ENCODE measurements at regions of chr4 and their contacts with region 1.

Region 1: GRCh38 chr4:184528051-184528450 is 53.7 kb upstream of the IRF2 start:
- DNase-seq: no peak
- CTCF ChIP-seq: no peak

Region 2: GRCh38 chr4:184487513-184487912 is 40.5 kb before region 1 on chr4:
- CTCF ChIA-PET with region 1: no interaction called
- POLR2A ChIA-PET with region 1: no interaction called
- DNase-seq: no peak
- CTCF ChIP-seq: no peak

Region 3: DNA sequence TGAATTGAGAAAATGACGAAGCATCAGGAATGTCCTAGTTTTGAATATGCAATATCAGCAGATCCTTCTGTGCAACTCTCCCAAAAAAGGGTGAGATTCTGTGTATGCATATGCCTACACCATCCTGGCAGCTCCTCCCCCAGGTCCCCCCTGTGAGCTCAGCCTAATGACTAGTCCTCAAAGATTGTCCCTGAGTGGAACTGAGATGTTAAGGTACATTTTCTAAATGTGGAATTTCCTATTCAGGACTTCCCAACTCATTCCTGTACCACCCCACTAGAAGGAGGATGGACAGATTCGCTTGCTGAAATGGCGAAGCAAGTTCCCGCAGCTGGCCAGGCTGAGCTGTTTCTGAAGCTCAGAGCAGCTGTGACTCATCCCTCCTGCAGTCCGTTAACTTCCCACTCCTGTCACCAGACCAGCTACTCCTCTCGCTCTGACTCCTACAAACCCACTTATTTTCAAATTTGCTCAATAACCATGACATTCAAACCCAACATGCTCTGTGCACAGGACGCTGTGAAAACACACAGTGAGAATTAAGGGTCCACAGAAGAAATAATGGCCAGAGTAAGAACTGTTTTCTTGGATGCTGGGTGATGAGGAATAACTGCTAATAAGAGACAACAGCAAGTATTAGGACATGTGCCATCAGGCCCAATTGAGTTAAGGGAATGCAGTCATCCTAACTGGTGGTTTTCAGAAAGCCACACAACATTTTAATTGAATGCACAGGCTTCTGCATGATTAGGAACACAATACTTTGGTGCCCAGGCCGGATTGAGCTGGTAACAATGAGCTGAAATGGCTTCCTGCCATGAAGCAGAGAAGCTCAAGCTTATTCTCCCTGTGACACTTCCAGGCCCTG is 13.7 kb before region 1 on chr4:
- CTCF ChIA-PET with region 1: interaction called, 15 read pairs
- POLR2A ChIA-PET with region 1: no interaction called
- DNase-seq: peak; percentile 89
- CTCF ChIP-seq: no peak

Region 4: DNA sequence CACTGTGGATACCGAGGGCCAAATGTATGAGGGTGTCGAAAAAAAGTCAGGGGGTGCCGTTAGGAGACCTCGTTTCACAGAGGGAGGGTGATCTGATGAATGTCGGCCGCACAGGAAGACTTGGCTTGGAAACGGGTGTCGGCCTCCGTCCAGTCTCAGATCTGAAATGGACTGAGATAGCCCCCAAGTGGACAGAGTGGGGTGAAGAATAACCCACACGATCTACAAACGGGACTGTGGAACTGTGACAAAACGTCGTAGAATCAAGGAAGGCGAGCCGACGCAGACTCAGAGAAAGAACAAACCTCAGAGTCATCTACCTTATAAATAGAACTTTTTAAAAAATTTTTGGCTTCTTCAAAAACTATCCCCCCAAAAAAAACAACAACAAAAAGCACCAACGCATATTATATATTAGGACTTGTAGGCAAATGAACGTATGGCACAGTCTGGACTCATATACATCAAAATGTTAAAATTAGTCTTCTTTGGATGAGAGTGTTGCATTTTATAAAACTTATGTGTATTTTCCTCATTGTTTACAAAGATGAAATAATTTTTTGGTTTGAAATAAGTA is 10.1 kb after region 1 on chr4:
- CTCF ChIA-PET with region 1: interaction called, 12 read pairs
- POLR2A ChIA-PET with region 1: no interaction called
- DNase-seq: peak; percentile 76
- CTCF ChIP-seq: peak; percentile 70

Region 5: GRCh38 chr4:184575306-184575705 is 47.3 kb after region 1 on chr4:
- CTCF ChIA-PET with region 1: no interaction called
- POLR2A ChIA-PET with region 1: no interaction called
- DNase-seq: no peak
- CTCF ChIP-seq: no peak

Region 6: GRCh38 chr4:184722798-184723197 is 194.7 kb after region 1 on chr4:
- CTCF ChIA-PET with region 1: no interaction called
- POLR2A ChIA-PET with region 1: no interaction called
- DNase-seq: no peak
- CTCF ChIP-seq: no peak